Left colon (tissue), 2 donors: ENCODE measurements at regions of chr22 and their contacts with region 1.

Region 1: GRCh38 chr22:17552737-17553136 is 10.6 kb upstream of the SLC25A18 start:
- DNase-seq: no peak
- ATAC-seq: peak; percentile 42

Region 2: GRCh38 chr22:17742527-17742902 is 189.8 kb after region 1 on chr22:
- intact Hi-C with region 1: no loop called
- DNase-seq: peak; percentile 39 to 67
- ATAC-seq: peak; percentile 82

Region 3: DNA sequence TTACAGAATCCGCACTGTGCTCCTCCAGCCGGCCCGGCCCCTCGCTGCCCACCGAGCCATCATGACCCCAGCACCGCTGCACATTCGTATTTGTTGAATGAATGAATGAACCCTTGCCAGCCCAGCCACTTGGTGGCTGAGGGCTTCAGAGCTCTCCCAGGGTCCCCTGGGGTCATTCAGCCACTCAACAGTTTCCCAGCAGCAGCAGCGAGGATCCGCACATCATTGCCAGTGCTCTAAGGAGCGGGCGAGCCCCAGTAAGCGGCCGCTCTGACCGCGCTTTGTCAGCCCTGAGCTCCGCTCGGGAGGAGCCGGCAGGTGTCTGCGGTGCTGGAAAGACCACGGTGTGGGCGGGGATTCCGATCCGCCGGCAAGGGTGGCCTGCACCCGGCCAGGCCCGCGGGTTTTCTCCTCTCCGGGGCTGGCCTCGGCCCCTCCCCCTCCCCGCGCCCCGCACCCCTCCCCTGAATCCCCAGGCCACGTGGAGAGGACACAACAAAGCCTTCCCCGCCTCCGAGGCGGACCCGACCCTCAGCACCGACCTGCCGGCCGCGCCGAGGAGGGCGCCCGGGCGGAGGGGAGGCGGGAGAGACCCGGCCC is 221.0 kb after region 1 on chr22:
- intact Hi-C with region 1: no loop called
- DNase-seq: peak in 1 of 2 donors; percentile 72
- ATAC-seq: peak; percentile 60

Region 4: DNA sequence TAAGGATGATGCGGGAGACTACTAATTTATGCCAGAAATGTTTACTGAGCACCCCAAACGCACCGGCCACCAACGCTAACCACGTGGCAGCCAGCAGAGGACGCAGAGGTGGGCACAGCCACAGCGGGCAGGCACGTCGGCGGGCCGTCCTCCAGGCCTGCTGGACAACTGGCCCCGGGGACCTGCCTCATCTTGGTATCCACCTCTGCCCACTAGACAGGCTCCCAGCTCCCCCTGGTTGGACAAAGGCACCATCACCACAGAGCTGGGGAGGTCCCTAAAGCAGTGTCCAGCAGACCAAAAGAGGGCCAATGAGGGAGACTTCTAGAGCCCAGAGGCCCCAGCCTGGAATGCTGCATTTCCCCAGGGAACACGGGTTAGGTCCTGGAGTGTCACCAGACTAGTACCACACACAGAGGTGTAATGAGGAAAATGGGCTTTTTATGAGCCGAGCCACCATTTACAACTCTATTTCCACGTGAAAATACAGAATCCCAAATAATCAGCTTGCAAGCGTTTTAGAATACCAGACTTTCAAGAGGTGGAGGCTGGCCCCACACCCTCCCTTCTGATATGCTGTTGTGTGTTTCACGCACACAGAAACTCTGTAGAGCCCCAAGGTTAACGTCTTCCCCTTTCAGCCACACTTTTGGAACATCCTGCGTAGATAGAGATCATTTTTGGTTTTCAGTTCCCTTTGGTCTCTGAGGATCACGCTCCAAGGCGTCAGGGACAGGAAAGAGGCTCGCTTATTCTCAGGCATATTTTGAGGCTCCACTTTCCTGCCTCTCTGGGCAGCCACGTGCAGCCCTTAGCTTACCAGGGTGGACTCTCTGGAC is 245.2 kb after region 1 on chr22:
- intact Hi-C with region 1: loop called in 1 of 2 experiments (anchors 10 kb)
- DNase-seq: no peak
- ATAC-seq: no peak